Left cardiac atrium (tissue), 4 donors: ENCODE measurements at regions of chr19 and their contacts with region 1.

Region 1: GRCh38 chr19:35044317-35045117 is 3.0 kb downstream of the HPN start:
- DNase-seq: peak; percentile 58
- ATAC-seq: no peak

Region 2: GRCh38 chr19:35090506-35091237 is 46.2 kb after region 1 on chr19:
- intact Hi-C with region 1: loop called in 1 of 2 experiments (anchors 5 kb)
- DNase-seq: peak; percentile 51
- ATAC-seq: peak; percentile 90 to 94